Calu3 (cell line): ENCODE measurements at regions of chr19 and their contacts with region 1.

Region 1: DNA sequence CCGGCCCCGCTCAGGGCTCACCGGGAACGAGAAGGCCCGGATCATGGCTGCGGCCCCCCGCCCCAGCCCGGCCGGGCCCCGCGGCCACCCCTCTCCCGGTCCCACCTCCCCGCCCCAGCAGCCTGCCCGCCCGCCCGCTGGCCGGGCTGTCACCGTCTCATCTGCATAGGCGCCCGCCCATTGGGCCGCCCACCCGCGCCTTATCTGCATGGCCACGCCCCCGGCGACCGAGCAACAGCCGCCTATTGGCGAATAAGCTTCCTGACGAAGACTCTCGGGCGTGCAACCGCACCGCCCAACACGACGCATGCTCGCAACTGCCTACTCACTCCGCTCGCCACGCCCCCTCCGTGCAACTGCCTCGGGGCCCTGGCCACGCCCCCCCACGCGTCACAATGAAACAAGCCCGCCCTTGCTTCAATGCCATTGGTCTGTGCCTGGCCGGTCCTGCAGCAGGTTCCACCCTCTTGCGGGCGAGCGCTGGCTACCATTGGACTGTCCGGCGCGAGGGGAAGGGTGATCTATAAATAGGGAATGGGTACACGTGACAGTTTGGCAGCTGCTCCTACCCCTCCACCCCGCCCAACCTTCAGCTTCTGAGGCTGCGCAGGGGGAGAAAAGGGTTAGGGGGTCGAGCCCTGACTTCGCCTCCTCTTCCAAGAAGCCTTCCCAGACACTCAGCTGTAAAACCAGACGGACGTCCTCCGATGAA is at the start of gene DACT3:
- DNase-seq: peak; percentile 100
- H3K4me3 Mint-ChIP-seq: peak within 1 kb of the TSS; percentile 70
- H3K27ac Mint-ChIP-seq: peak within 1 kb of the TSS; percentile 84
- H3K4me1 Mint-ChIP-seq: peaks cover 9% of the 10 kb centered on the region
- H3K27me3 Mint-ChIP-seq: peaks cover 71% of the 10 kb centered on the region
- CTCF ChIP-seq: no peak
- total RNA-seq, gene DACT3: not detected in 2 replicates

Region 2: GRCh38 chr19:46529622-46530462 is 131.3 kb before region 1 on chr19:
- CTCF ChIA-PET with region 1: interaction called, 22 read pairs
- intact Hi-C with region 1: loop called (anchors 5 kb)
- DNase-seq: peak; percentile 82
- H3K4me3 Mint-ChIP-seq: no peak overlapping the region
- H3K27ac Mint-ChIP-seq: no peak overlapping the region
- H3K4me1 Mint-ChIP-seq: peaks cover 12% of the 10 kb centered on the region
- H3K27me3 Mint-ChIP-seq: peaks cover 78% of the 10 kb centered on the region
- CTCF ChIP-seq: peak; percentile 91

Region 3: DNA sequence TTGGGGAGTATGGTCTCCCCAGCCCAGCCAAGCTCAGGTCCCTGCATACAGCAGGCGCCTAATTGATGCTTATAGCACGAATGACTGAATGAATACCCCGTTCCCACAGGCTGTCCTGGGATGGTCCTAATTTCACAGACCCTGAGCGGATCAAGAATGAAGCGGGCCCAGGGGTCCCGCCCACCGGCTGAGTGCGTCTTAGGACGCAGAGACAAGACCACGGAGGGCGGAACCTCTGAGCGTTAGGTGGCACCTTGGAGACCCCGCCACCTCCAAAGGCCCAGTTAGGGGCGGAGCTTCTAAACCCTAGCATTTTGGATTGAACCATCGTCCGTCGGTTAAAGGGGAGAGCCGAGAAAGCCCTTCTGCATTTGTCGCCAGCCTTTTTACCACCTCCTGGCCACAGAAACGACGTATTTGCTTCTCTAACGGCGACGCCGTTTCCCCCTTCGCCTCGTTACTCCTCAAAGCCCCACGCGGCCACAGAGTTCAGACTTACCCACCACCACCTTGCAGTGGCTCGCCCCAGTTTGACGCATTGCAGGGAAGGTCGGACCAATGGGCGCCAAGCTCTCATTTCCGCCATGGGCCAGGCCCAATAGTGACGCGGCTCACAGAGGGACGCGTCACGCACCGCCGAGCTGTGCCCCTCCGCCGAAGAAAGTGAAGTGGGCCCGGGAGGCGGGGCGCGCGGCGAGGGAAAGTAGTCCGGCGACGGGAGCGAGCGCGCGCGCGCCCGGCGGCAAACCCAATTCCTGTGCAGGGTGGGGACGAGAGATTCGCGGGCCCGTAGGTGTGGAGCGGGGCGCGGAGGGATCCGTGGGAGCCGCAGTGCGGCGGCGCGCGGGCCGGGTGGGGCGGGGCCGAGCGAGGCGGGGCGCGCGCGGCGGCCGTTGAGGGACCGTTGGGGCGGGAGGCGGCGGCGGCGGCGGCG is 60.5 kb before region 1 on chr19:
- CTCF ChIA-PET with region 1: interaction called, 11 read pairs
- intact Hi-C with region 1: no loop called
- DNase-seq: peak; percentile 98
- H3K4me3 Mint-ChIP-seq: peak overlapping the region; percentile 98
- H3K27ac Mint-ChIP-seq: peak overlapping the region; percentile 100
- H3K4me1 Mint-ChIP-seq: peaks cover 23% of the 10 kb centered on the region
- H3K27me3 Mint-ChIP-seq: no peaks in the 10 kb centered on the region
- CTCF ChIP-seq: no peak

Region 4: DNA sequence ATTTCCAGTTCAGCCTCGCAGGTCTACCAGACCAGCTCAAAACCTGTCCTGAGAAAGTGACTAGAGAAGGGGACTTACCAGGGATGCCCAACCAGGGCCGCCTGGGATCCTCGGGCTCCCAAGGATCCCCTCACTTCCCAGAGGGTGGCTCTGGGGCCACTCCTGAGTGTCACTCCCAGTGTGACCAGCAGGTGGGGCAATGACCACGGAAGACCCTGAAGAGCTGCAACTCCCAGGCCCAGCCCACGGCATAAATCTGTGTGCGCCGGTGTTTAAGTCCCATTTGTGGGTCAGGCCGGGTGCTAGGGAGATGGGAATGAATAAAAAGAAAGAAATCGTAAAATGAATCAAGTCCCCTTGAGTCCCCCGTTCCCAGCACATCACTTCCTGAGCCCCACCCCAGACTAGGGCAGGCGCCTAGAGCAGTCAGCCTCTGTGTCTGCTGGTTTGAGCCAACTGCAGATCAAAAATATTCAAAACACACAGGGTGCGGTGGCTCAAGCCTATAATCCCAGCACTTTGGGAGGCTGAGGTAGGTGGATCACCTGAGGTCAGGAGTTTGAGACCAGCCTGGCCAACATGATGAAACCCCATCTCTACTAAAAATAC is 47.0 kb before region 1 on chr19:
- CTCF ChIA-PET with region 1: interaction called, 121 read pairs
- intact Hi-C with region 1: loop called (anchors 1 kb)
- DNase-seq: peak; percentile 92
- H3K4me3 Mint-ChIP-seq: no peak overlapping the region
- H3K27ac Mint-ChIP-seq: no peak overlapping the region
- H3K4me1 Mint-ChIP-seq: peaks cover 9% of the 10 kb centered on the region
- H3K27me3 Mint-ChIP-seq: peaks cover 18% of the 10 kb centered on the region
- CTCF ChIP-seq: peak; percentile 89

Region 5: GRCh38 chr19:46637224-46637623 is 24.0 kb before region 1 on chr19:
- CTCF ChIA-PET with region 1: interaction called, 12 read pairs
- intact Hi-C with region 1: no loop called
- DNase-seq: no peak
- H3K4me3 Mint-ChIP-seq: no peak overlapping the region
- H3K27ac Mint-ChIP-seq: no peak overlapping the region
- H3K4me1 Mint-ChIP-seq: peaks cover 10% of the 10 kb centered on the region
- H3K27me3 Mint-ChIP-seq: peaks cover 37% of the 10 kb centered on the region
- CTCF ChIP-seq: no peak

Region 6: DNA sequence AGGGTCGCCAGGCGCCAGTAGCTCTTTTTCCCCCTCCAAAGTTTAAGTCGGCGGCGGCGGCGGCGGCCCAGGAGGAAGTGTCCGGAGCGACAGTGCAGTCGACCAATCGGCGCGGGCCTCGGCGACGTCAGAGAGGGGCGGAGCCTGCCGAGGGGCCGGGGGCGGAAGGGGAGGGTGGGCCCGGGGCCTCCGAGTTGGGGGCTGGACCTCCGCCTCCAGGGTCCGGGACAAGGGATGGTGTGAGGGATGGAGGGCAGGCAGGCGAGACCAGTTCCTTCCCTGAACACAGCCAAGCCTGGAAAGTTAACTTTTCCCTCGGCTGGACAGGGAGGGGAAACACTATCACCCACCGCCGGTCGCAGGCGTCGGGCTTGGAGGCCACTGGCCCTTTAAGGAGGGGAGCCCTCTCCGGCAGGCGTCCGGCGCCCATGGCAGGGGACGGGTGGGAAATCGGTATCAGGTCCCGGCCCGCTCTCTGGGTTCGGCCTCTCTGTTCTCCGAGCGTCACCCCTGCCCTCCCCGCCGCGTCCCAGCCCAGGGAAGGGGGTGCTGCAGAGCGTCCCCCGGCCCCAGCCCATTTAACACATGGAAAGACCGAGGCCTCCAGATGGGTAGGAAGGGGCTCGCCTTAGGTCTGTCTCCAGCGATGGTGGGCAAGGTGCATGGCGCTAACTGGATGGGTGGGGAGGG is 56.0 kb after region 1 on chr19 and contains the start of gene PRKD2:
- CTCF ChIA-PET with region 1: interaction called, 16 read pairs
- intact Hi-C with region 1: no loop called
- DNase-seq: peak; percentile 95
- H3K4me3 Mint-ChIP-seq: peak within 1 kb of the TSS; percentile 94
- H3K27ac Mint-ChIP-seq: peak within 1 kb of the TSS; percentile 96
- H3K4me1 Mint-ChIP-seq: peaks cover 28% of the 10 kb centered on the region
- H3K27me3 Mint-ChIP-seq: no peaks in the 10 kb centered on the region
- CTCF ChIP-seq: no peak
- total RNA-seq, gene PRKD2: 98.3 and 110 TPM in 2 replicates

Region 7: DNA sequence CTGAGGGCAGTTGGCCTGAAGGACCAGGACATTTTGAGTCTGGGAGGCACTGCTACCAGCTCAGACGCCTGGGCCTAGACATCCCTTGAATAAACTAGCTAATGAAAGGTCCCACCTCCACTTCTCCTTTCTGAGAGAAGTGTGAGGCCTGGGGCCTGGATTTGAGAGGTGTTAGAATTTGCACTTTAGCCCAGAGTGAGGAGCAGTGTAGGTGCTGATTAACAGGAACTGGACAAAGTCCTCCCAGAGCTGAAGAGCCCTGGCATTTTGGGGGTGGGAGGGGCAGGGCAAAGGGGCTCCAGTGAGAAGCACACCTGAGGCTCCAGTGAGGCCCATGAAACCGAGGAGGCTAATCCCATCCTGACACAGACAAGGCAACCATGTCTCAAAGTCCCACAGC is 142.4 kb after region 1 on chr19:
- CTCF ChIA-PET with region 1: no interaction called
- intact Hi-C with region 1: no loop called
- DNase-seq: no peak
- H3K4me3 Mint-ChIP-seq: no peak overlapping the region
- H3K27ac Mint-ChIP-seq: no peak overlapping the region
- H3K4me1 Mint-ChIP-seq: no peaks in the 10 kb centered on the region
- H3K27me3 Mint-ChIP-seq: no peaks in the 10 kb centered on the region
- CTCF ChIP-seq: no peak